GM10248 (cell line): ENCODE measurements at regions of chr14 and their contacts with region 1.

Region 1: GRCh38 chr14:80764496-80765200 is 176.9 kb downstream of the CEP128 start:
- DNase-seq: no peak
- CTCF ChIP-seq: no peak

Region 2: DNA sequence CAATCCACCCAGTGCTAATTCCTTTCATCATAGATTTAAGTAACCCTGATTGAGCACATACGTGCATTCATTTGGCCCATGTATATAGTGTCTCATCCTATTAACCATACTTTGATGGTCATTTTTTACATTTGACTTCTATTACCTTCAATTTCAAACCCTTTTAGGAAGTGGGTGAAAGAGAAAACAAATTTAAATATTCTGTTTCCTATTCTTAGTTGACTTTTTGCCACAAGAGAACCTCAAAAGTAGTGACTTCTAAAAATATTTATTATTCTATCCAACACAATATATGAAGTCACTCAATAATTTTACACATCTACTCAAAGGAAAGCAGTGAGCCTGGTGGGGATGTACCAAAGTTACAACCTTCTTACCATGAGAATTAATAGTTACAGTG is 12.0 kb after region 1 on chr14:
- CTCF ChIA-PET with region 1: interaction called, 14 read pairs
- POLR2A ChIA-PET with region 1: no interaction called
- DNase-seq: no peak
- CTCF ChIP-seq: no peak